HepG2 (cell line): ENCODE measurements at regions of chr9 and their contacts with region 1.

Region 1: GRCh38 chr9:105608721-105609598 is 51.0 kb downstream of the FKTN start:
- DNase-seq: peak; percentile 50
- ATAC-seq: peak; percentile 72
- H3K4me3 ChIP-seq: no peak overlapping the region
- H3K27ac ChIP-seq: no peak overlapping the region
- H3K4me1 ChIP-seq: no peaks in the 10 kb centered on the region
- H3K27me3 ChIP-seq: no peaks in the 10 kb centered on the region
- CTCF ChIP-seq: peak; percentile 60
- EP300 ChIP-seq: no peak
- POLR2A ChIP-seq: no peak
- RAD21 ChIP-seq: no peak

Region 2: GRCh38 chr9:105557771-105558610 is 51.0 kb before region 1 on chr9 and contains the start of gene FKTN:
- CTCF ChIA-PET with region 1: no interaction called
- POLR2A ChIA-PET with region 1: no interaction called
- in situ Hi-C with region 1: loop called (anchors 10 kb)
- intact Hi-C with region 1: no loop called
- DNase-seq: peak; percentile 73
- ATAC-seq: peak; percentile 95
- H3K4me3 ChIP-seq: peak within 1 kb of the TSS; percentile 76 to 93 (median 90)
- H3K27ac ChIP-seq: peak within 1 kb of the TSS; percentile 35
- H3K4me1 ChIP-seq: peaks cover 12% of the 10 kb centered on the region
- H3K27me3 ChIP-seq: no peaks in the 10 kb centered on the region; a peak in 1 of 5 replicates
- CTCF ChIP-seq: no peak
- EP300 ChIP-seq: no peak
- POLR2A ChIP-seq: peak in 1 of 2 experiments; percentile 84; a peak in 2 of 4 replicates
- RAD21 ChIP-seq: peak; percentile 9; the same call in 1 of the 2 replicates
- total RNA-seq, gene FKTN: 13.5 and 15.2 TPM in 2 replicates

Region 3: DNA sequence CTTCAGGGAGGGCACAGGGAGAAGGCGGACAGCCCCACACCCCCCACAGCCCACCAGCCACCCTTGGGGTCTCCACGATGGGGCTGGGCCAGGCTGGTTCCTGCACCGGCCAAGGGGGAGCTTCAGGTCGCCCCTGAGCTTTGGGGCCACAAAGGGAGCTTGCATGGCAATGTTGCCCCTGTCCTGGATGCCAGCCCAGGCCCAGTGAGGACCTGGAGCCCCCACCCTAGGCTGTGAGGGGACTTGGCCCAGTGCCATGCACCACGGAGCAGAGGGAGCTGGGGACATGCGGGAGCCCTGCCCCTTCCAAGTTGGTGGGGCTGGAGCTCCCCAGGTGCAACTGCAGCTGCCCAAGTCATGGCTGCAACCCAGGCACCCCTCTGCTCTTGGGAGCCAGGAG is 103.8 kb after region 1 on chr9:
- CTCF ChIA-PET with region 1: no interaction called
- POLR2A ChIA-PET with region 1: no interaction called
- in situ Hi-C with region 1: loop called (anchors 10 kb)
- intact Hi-C with region 1: no loop called
- DNase-seq: no peak
- ATAC-seq: no peak
- H3K4me3 ChIP-seq: no peak overlapping the region
- H3K27ac ChIP-seq: no peak overlapping the region
- H3K4me1 ChIP-seq: no peaks in the 10 kb centered on the region
- H3K27me3 ChIP-seq: no peaks in the 10 kb centered on the region
- CTCF ChIP-seq: no peak
- EP300 ChIP-seq: no peak
- POLR2A ChIP-seq: no peak
- RAD21 ChIP-seq: no peak

Region 4: DNA sequence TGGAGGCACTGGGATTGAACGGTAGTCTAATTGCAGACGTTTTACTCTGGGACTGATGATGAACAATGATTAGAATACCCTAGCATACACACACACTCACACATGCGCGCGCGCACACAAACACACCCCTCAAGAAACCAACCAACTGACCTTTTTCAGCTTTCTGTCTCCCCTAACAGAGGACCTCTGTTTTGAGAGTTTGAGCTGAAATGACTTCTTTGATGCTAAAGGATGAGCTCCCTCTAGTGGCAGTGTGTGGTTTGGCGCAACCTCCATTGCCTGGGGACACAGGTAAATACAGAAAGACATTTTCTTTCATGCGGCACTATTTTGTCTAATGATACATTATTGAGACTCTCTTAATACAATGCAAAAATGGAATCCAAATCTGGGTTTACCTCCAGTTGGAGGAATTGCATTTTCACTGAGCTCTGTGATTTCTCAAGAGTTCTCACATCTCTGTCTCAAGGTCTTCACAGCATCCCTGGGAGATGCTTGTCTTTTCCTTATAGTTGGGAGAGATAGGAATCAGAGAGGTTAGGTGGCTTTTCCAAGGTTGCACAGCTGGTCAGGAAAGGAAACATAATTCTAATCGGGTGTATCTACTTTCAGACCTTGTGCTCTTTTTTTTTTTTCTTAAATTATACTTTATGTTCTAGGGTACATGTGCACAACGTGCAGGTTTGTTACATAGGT is 272.8 kb after region 1 on chr9:
- CTCF ChIA-PET with region 1: interaction called, 6 read pairs
- POLR2A ChIA-PET with region 1: no interaction called
- in situ Hi-C with region 1: no loop called
- intact Hi-C with region 1: loop called (anchors 5 kb)
- DNase-seq: peak; percentile 65
- ATAC-seq: peak; percentile 96
- H3K4me3 ChIP-seq: no peak overlapping the region
- H3K27ac ChIP-seq: no peak overlapping the region
- H3K4me1 ChIP-seq: no peaks in the 10 kb centered on the region
- H3K27me3 ChIP-seq: peaks cover 0 to 1% of the 10 kb centered on the region in 2 experiments; a peak in 2 of 5 replicates
- CTCF ChIP-seq: peak; percentile 84
- EP300 ChIP-seq: no peak
- POLR2A ChIP-seq: no peak
- RAD21 ChIP-seq: peak; percentile 61